ENCODE measurements at regions of chr14 and their contacts with region 1.

Region 1: DNA sequence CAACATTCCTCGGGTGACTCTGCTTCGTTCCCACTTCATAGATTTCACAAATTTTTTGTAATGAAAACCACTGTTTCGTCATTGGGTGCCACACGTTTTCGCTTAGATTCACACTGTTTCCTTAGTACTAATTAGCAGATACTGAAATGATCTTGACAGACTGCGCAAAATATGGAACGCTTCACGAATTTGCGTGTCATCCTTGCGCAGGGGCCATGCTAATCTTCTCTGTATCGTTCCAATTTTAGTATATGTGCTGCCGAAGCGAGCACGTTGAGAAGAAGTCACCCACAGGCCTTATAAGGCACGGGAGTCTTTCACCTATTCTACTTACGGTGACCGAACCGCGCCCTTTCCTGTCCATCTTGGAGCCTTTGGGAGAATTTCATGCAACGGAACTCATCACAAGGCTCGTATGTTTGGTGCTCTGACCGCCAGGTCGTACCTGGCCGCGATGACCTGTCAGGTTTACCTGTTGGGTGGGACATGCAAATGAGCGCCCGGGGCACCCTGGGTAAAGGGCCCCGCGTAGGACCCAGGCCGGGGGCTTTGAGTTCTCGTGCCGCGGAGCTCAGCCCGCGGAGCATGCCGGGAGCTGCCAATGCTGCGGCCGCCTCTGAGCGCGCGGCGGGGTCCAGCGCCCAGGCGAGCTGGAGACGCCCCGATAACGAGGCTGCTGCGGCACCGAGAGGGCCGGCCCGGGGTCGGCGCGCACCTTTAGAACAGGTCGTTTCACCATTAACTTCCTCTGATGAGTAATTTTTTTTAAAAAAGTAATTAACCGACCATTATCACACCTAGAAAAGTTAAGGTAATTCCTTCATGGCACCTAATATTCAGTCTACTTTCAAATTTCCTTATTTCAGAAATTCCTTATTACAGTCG is at the start of gene RNU6-8:
- DNase-seq: peak; percentile 82 to 91
- ATAC-seq: peak; percentile 72 to 76
- H3K4me3 ChIP-seq: peak within 1 kb of the TSS; percentile 81 to 95 (median 84)
- H3K27ac ChIP-seq: peak within 1 kb of the TSS; percentile 87 to 96 (median 92)
- H3K4me1 ChIP-seq: peaks cover 11 to 17% of the 10 kb centered on the region in 2 donors
- H3K27me3 ChIP-seq: no peaks in the 10 kb centered on the region
- CTCF ChIP-seq: no peak
- POLR2A ChIP-seq: peak; percentile 84 to 88
- total RNA-seq, gene RNU6-8: not detected

Region 2: GRCh38 chr14:31026395-31027118 is 1176.7 kb before region 1 on chr14:
- in situ Hi-C with region 1: no loop called
- intact Hi-C with region 1: loop called (anchors 10 kb)
- DNase-seq: peak; percentile 96 to 98
- ATAC-seq: peak; percentile 86 to 94
- H3K4me3 ChIP-seq: peak overlapping the region; percentile 90 to 98 (median 92)
- H3K27ac ChIP-seq: peak overlapping the region; percentile 95 to 100 (median 100)
- H3K4me1 ChIP-seq: peaks cover 28 to 29% of the 10 kb centered on the region in 2 donors
- H3K27me3 ChIP-seq: no peaks in the 10 kb centered on the region
- CTCF ChIP-seq: peak in 2 of 5 experiments; percentile 6 to 9
- POLR2A ChIP-seq: peak; percentile 58 to 85

Region 3: GRCh38 chr14:31420319-31421111 is 782.7 kb before region 1 on chr14 and contains the start of gene HEATR5A:
- in situ Hi-C with region 1: no loop called
- intact Hi-C with region 1: loop called (anchors 10 kb)
- DNase-seq: peak; percentile 91 to 92
- ATAC-seq: peak; percentile 93
- H3K4me3 ChIP-seq: peak within 1 kb of the TSS; percentile 80 to 97 (median 96)
- H3K27ac ChIP-seq: peak within 1 kb of the TSS; percentile 92 to 94 (median 92)
- H3K4me1 ChIP-seq: peaks cover 16 to 21% of the 10 kb centered on the region in 2 donors
- H3K27me3 ChIP-seq: no peaks in the 10 kb centered on the region
- CTCF ChIP-seq: peak in 3 of 5 experiments; percentile 29 to 37 (median 32)
- POLR2A ChIP-seq: peak; percentile 99
- total RNA-seq, gene HEATR5A: 11.3 to 39.7 (median 19.3) TPM

Region 4: GRCh38 chr14:31926123-31926522 is 277.1 kb before region 1 on chr14:
- in situ Hi-C with region 1: no loop called
- intact Hi-C with region 1: loop called (anchors 5 kb)
- DNase-seq: no peak
- ATAC-seq: no peak
- H3K4me3 ChIP-seq: no peak overlapping the region
- H3K27ac ChIP-seq: peak overlapping the region in 3 of 4 donors; percentile 69 to 74 (median 70)
- H3K4me1 ChIP-seq: peaks cover 18 to 23% of the 10 kb centered on the region in 2 donors
- H3K27me3 ChIP-seq: no peaks in the 10 kb centered on the region
- CTCF ChIP-seq: peak in 4 of 5 experiments; percentile 31 to 53 (median 40)
- POLR2A ChIP-seq: no peak

Region 5: DNA sequence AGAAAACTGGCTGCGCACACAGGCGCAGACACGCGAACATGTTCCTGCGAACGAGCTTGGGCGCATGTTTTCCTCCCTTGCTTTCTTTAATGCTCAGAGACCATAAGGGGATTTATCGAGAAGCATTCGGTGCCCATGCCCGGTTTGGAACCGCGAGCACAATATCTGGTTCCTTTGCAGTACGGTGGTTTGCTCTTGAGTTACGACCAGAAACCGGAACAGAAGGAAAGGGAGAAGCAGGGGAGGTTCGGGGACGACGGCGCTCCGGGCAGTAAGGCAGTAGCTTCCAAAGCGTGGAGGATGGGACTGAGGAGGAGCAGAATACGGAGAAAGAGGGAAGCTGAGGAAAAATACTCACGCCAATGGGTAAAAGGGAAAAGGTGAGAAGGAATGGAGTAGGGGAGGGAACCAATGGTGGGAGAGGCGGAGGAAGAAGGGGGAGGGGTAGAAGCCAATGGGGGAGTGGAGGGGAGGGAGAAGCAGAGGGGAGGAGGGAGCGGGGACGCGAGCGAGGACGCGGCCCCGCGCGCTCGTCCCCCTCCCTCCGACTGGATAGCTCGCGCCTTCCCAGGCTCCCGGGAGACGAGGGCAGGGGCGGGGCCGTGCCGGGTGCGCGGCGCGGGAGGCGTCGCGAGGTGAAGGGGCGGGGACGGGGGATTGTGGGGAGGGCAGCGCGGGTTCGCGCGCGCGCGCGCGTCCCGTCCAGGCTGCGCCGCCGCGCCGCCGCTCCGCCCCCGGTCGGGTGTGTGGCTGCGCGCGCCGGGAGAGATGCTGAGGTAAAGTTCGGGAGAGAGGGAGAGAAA is 126.8 kb before region 1 on chr14:
- in situ Hi-C with region 1: loop called in 3 of 4 experiments (anchors 5 to 10 kb)
- intact Hi-C with region 1: loop called (anchors 1 kb)
- DNase-seq: peak; percentile 93 to 96
- ATAC-seq: peak; percentile 87 to 89
- H3K4me3 ChIP-seq: peak overlapping the region; percentile 89 to 99 (median 96)
- H3K27ac ChIP-seq: peak overlapping the region; percentile 98 to 100 (median 100)
- H3K4me1 ChIP-seq: peaks cover 27 to 42% of the 10 kb centered on the region in 2 donors
- H3K27me3 ChIP-seq: no peaks in the 10 kb centered on the region
- CTCF ChIP-seq: no peak
- POLR2A ChIP-seq: peak; percentile 64 to 65

Region 6: GRCh38 chr14:32083789-32084188 is 119.5 kb before region 1 on chr14:
- in situ Hi-C with region 1: loop called in 3 of 4 experiments (anchors 5 to 10 kb)
- intact Hi-C with region 1: no loop called
- DNase-seq: no peak
- ATAC-seq: no peak
- H3K4me3 ChIP-seq: no peak overlapping the region
- H3K27ac ChIP-seq: no peak overlapping the region
- H3K4me1 ChIP-seq: peaks cover 55 to 57% of the 10 kb centered on the region in 2 donors
- H3K27me3 ChIP-seq: no peaks in the 10 kb centered on the region
- CTCF ChIP-seq: no peak
- POLR2A ChIP-seq: no peak

Region 7: GRCh38 chr14:32244404-32244803 is 41.2 kb after region 1 on chr14:
- in situ Hi-C with region 1: no loop called
- intact Hi-C with region 1: no loop called
- DNase-seq: no peak
- ATAC-seq: no peak
- H3K4me3 ChIP-seq: no peak overlapping the region
- H3K27ac ChIP-seq: no peak overlapping the region
- H3K4me1 ChIP-seq: no peaks in the 10 kb centered on the region
- H3K27me3 ChIP-seq: no peaks in the 10 kb centered on the region
- CTCF ChIP-seq: no peak
- POLR2A ChIP-seq: no peak

Region 8: DNA sequence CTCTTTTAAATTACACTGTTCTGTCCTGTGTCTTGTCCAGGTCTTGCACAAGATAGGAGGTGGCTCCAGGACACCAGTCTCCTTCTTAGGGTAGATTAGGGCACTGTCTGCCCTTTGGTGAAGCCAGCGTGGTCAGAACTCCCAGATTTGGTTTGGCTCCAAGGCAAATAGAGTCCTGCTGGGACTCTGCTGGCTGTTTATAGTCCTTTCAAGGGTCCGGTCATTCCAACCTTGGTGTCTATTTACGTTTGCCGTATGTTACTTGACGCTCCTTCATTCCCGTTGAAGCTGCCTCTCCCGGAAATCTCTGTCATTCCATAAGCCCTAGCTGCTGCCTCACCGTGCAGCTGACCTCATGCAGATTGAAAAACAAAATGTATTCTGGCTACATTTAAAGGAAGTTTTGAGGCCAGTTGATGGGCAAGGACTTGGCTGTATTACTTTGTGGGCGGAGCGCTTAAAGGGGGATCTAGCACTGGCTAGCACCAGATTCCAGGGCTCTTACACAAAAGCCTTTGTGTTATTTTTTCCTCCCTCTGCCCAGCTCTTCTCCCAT is 306.5 kb after region 1 on chr14:
- in situ Hi-C with region 1: loop called in 1 of 4 experiments (anchors 10 kb)
- intact Hi-C with region 1: loop called (anchors 5 kb)
- DNase-seq: peak; percentile 76 to 90
- ATAC-seq: peak; percentile 77 to 80
- H3K4me3 ChIP-seq: peak overlapping the region; percentile 7 to 39 (median 22)
- H3K27ac ChIP-seq: peak overlapping the region; percentile 78 to 94 (median 90)
- H3K4me1 ChIP-seq: peaks cover 72 to 78% of the 10 kb centered on the region in 2 donors
- H3K27me3 ChIP-seq: no peaks in the 10 kb centered on the region
- CTCF ChIP-seq: no peak
- POLR2A ChIP-seq: peak in 1 of 2 donors; percentile 61